ENCODE measurements at regions of chr1 and their contacts with region 1.

Region 1: GRCh38 chr1:8314346-8315280 is 3.3 kb upstream of the SLC45A1 start:
- DNase-seq: peak; percentile 62
- H3K4me3 ChIP-seq: no peak overlapping the region
- H3K27ac ChIP-seq: no peak overlapping the region
- H3K4me1 ChIP-seq: peaks cover 19% of the 10 kb centered on the region
- H3K27me3 ChIP-seq: no peaks in the 10 kb centered on the region
- CTCF ChIP-seq: peak; percentile 95 to 97

Region 2: DNA sequence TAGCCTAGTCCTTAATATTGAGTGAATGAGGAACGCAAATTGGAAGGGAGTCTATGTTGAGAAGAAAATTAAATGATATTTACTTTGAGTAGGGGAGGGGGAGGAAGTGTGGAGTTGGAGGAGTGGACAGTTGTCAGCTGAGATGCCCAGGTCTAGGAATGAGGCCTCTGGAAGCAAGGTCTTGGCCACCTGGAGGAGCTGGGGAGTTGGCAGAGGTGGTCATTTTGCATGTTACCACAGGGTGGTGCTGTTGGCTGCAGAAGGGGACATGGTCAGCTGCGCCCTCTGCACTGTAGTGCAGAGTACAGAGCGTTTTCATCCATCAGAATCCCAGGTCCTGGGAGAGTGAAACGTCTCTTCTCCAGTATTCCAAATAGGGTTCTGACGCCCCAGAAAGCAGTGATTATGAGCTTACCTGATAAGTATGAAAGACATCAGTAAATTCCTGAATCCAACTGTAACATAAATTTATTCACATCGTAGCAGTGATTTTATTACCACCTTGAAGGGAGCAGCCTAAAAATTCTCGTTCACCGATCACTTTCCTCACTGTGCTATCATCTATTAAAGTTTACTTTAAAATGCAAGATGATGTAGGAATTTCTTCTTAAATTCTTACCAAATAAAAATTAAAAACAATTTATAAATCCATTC is 339.3 kb before region 1 on chr1:
- CTCF ChIA-PET with region 1: interaction called, 7 read pairs
- dilution Hi-C with region 1: loop called (anchors 5 kb)
- in situ Hi-C with region 1: loop called (anchors 5 to 10 kb)
- intact Hi-C with region 1: loop called (anchors 1 kb)
- DNase-seq: peak; percentile 75
- H3K4me3 ChIP-seq: no peak overlapping the region
- H3K27ac ChIP-seq: no peak overlapping the region
- H3K4me1 ChIP-seq: no peaks in the 10 kb centered on the region
- H3K27me3 ChIP-seq: no peaks in the 10 kb centered on the region
- CTCF ChIP-seq: peak; percentile 96 to 98

Region 3: DNA sequence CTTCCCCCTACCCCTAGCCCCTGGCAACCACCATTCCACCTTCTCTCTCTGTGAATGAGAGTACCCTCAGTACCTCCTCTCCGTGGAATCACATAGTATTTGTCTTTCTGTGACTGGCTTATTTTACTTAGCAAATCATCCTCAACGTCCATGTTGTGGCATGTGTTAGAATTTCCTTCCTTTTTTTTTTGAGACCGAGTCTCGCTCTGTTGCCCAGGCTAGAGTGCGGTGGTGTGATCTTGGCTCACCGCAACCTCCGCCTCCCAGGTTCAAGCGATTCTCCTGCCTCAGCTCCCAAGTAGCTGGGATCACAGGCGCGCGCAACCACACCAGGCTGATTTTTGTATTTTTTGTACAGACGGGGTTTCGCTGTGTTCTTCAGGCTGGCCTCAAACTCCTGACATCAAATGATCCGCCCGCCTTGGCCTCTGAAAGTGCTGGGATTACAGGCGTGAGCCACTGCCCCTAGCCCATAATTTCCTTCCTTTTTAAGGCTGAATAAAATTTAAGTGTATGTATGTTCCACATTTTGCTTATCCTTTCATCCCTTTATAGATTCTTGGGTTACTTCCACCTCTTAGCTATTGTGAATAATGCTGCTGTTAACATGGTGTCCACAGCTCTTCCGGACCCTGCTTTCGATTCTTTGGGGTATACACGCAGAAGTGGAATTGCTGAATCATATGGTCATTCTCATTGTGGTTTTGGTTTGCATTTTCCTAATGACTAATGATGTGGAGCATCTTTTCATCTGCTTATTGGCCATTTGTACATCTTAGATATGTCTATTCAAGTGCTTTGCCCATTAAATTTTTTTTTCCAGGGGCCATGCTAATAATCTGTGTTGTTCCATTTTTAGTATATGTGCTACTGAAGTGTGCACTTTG is 320.8 kb before region 1 on chr1:
- CTCF ChIA-PET with region 1: interaction called, 4 read pairs
- dilution Hi-C with region 1: no loop called
- in situ Hi-C with region 1: loop called in 1 of 2 experiments (anchors 10 kb)
- intact Hi-C with region 1: no loop called
- DNase-seq: no peak
- H3K4me3 ChIP-seq: no peak overlapping the region
- H3K27ac ChIP-seq: no peak overlapping the region
- H3K4me1 ChIP-seq: peaks cover 3% of the 10 kb centered on the region
- H3K27me3 ChIP-seq: no peaks in the 10 kb centered on the region
- CTCF ChIP-seq: no peak

Region 4: GRCh38 chr1:8026153-8026975 is 288.2 kb before region 1 on chr1 and contains the start of gene ERRFI1:
- CTCF ChIA-PET with region 1: interaction called, 5 read pairs
- dilution Hi-C with region 1: no loop called
- in situ Hi-C with region 1: loop called in 1 of 2 experiments (anchors 10 kb)
- intact Hi-C with region 1: loop called (anchors 1 kb)
- DNase-seq: peak; percentile 93
- H3K4me3 ChIP-seq: peak within 1 kb of the TSS; percentile 69 to 96 (median 90)
- H3K27ac ChIP-seq: peak within 1 kb of the TSS; percentile 93
- H3K4me1 ChIP-seq: peaks cover 46% of the 10 kb centered on the region
- H3K27me3 ChIP-seq: no peaks in the 10 kb centered on the region
- CTCF ChIP-seq: no peak
- total RNA-seq, gene ERRFI1: 38.8 to 150 TPM

Measured in mammary epithelial cell (primary cell).